A673 (cell line): ENCODE measurements at regions of chr12 and their contacts with region 1.

Region 1: DNA sequence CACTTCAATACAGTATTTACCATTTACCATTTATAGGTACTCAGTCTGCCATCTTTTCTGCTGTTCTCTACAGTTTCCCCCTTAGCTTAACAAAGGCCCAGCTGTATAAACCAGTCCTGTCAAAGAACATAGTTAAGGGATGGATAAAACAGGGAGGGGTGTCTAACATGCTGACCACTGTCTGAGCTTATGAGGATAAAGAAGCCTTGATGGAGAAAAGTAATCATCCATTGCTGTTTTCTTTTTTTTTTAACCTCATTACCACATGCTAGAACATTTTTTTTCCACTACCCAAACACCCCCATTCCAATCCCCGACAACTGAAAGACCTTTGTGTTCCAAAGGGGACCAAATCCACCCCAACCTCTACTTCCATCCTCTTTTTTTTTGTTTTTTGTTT is 39.9 kb downstream of the SOX5 start:
- DNase-seq: no peak
- H3K4me3 ChIP-seq: no peak overlapping the region
- H3K27ac ChIP-seq: no peak overlapping the region
- H3K4me1 ChIP-seq: no peaks in the 10 kb centered on the region
- H3K27me3 ChIP-seq: no peaks in the 10 kb centered on the region
- CTCF ChIP-seq: no peak

Region 2: GRCh38 chr12:23816394-23816851 is 93.1 kb before region 1 on chr12:
- CTCF ChIA-PET with region 1: no interaction called
- POLR2A ChIA-PET with region 1: interaction called, 20 read pairs
- intact Hi-C with region 1: no loop called
- DNase-seq: no peak
- H3K4me3 ChIP-seq: no peak overlapping the region
- H3K27ac ChIP-seq: no peak overlapping the region
- H3K4me1 ChIP-seq: no peaks in the 10 kb centered on the region
- H3K27me3 ChIP-seq: no peaks in the 10 kb centered on the region
- CTCF ChIP-seq: no peak